Sigmoid colon (tissue), 7 donors: ENCODE measurements at regions of chrX and their contacts with region 1.

Region 1: DNA sequence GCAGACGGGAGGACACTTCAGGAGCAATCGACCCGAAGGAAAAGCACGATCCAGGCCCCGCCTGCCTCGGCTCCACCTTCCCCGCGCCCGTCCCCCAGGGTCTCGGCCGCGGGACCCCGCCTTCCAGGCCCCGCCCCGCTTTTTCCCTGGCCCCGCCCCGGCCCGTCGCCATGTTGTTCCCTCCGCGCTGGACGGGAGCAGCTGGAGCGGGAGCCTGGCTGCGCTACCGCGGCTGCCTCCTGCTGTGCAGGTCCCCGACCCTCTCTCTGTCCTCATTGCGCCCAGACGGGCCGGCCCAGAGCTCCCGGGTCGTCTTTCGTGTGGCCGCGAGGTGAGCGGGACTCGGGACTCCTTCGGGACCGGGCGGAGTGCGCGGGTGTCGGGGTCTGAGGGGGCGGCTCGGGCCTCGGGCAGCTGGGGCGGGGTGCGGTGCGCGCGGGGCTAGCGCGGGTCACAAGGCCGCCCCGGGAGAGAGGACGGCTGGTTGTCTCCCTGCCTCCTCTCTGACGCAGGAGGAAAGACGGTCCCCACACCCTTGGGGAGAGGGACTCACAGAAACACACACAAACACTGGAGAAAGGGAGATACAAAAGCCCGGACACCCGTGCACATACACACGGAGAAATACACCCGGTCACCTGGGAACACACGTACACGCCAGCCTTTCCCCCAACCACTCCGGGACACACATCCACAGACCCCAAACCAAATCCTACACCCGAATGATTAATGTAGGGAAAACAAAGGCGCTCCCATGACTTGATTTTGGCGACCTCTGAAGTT is at the start of gene RAB9A:
- DNase-seq: peak; percentile 92
- H3K4me3 ChIP-seq: peak within 1 kb of the TSS; percentile 66 to 74 (median 69)
- H3K27ac ChIP-seq: peak within 1 kb of the TSS; percentile 91 to 94 (median 93)
- H3K4me1 ChIP-seq: peaks cover 0 to 35% (median 20%) of the 10 kb centered on the region in 4 donors
- H3K27me3 ChIP-seq: peaks cover 0 to 4% (median 0%) of the 10 kb centered on the region in 3 donors
- CTCF ChIP-seq: no peak
- EP300 ChIP-seq: no peak
- POLR2A ChIP-seq: peak; percentile 85 to 87
- total RNA-seq, gene RAB9A: 11.8 to 28.6 (median 24.4) TPM

Region 2: GRCh38 chrX:13074297-13075262 is 614.6 kb before region 1 on chrX:
- intact Hi-C with region 1: no loop called
- DNase-seq: no peak
- H3K4me3 ChIP-seq: no peak overlapping the region
- H3K27ac ChIP-seq: no peak overlapping the region
- H3K4me1 ChIP-seq: peaks cover 0 to 5% (median 2%) of the 10 kb centered on the region in 4 donors
- H3K27me3 ChIP-seq: no peaks in the 10 kb centered on the region
- CTCF ChIP-seq: no peak
- EP300 ChIP-seq: no peak
- POLR2A ChIP-seq: no peak

Region 3: GRCh38 chrX:13734278-13735172 is 45.4 kb after region 1 on chrX and contains the starts of genes OFD1 and TRAPPC2:
- intact Hi-C with region 1: loop called (anchors 2 kb)
- DNase-seq: peak; percentile 96
- H3K4me3 ChIP-seq: peak within 1 kb of the TSS; percentile 69 to 90 (median 78)
- H3K27ac ChIP-seq: peak within 1 kb of the TSS; percentile 90 to 95 (median 92)
- H3K4me1 ChIP-seq: peaks cover 0 to 23% (median 8%) of the 10 kb centered on the region in 4 donors
- H3K27me3 ChIP-seq: peaks cover 0 to 5% (median 0%) of the 10 kb centered on the region in 3 donors
- CTCF ChIP-seq: no peak
- EP300 ChIP-seq: peak in 1 of 4 donors; percentile 31
- POLR2A ChIP-seq: peak; percentile 90 to 93
- total RNA-seq, gene OFD1: 12.8 to 46.0 (median 15.1) TPM
- total RNA-seq, gene TRAPPC2: 20.1 to 22.8 (median 22.4) TPM